K562 (cell line): ENCODE measurements at regions of chr6 and their contacts with region 1.

Region 1: GRCh38 chr6:80338201-80338836 is 231.8 kb downstream of the BCKDHB start:
- DNase-seq: peak; percentile 57 to 83 (median 68)
- ATAC-seq: peak; percentile 94
- H3K4me3 ChIP-seq: no peak overlapping the region
- H3K27ac ChIP-seq: no peak overlapping the region
- H3K4me1 ChIP-seq: no peaks in the 10 kb centered on the region
- H3K27me3 ChIP-seq: no peaks in the 10 kb centered on the region
- CTCF ChIP-seq: peak; percentile 66 to 84 (median 70)
- EP300 ChIP-seq: no peak
- POLR2A ChIP-seq: no peak
- RAD21 ChIP-seq: peak; percentile 29 to 54; a peak in 3 of 4 replicates

Region 2: GRCh38 chr6:80214436-80215022 is 123.8 kb before region 1 on chr6:
- CTCF ChIA-PET with region 1: no interaction called
- POLR2A ChIA-PET with region 1: no interaction called
- in situ Hi-C with region 1: no loop called
- intact Hi-C with region 1: loop called (anchors 2 kb)
- DNase-seq: peak; percentile 9 to 65 (median 32)
- ATAC-seq: peak; percentile 98
- H3K4me3 ChIP-seq: no peak overlapping the region
- H3K27ac ChIP-seq: no peak overlapping the region
- H3K4me1 ChIP-seq: no peaks in the 10 kb centered on the region
- H3K27me3 ChIP-seq: no peaks in the 10 kb centered on the region
- CTCF ChIP-seq: peak; percentile 64 to 84 (median 76)
- EP300 ChIP-seq: no peak
- POLR2A ChIP-seq: no peak
- RAD21 ChIP-seq: peak; percentile 66 to 81

Region 3: DNA sequence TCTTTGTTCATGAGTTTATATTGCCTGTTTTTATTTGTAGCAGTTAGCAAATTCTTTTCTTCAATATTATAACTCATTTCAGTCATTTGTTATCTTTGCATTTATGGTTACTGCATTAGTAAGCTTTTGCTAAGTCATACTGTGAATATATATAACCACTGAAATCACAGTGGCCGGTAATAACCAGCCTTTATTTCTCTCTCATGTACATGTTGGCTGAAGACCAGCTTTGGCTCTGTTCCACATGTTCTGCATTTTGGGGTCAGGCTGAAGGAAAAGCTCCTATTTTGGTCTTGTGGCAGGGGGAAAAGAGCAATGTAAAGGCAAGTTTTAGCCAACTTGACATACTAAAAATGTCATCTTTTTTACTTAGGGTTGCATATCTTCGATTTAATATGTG is 44.5 kb after region 1 on chr6:
- CTCF ChIA-PET with region 1: no interaction called
- POLR2A ChIA-PET with region 1: no interaction called
- in situ Hi-C with region 1: no loop called
- intact Hi-C with region 1: no loop called
- DNase-seq: no peak
- ATAC-seq: no peak
- H3K4me3 ChIP-seq: no peak overlapping the region
- H3K27ac ChIP-seq: no peak overlapping the region
- H3K4me1 ChIP-seq: no peaks in the 10 kb centered on the region
- H3K27me3 ChIP-seq: no peaks in the 10 kb centered on the region
- CTCF ChIP-seq: no peak
- EP300 ChIP-seq: no peak
- POLR2A ChIP-seq: no peak
- RAD21 ChIP-seq: no peak